CD4-positive, alpha-beta memory T cell (primary cell): ENCODE measurements at regions of chr18 and their contacts with region 1.

Region 1: DNA sequence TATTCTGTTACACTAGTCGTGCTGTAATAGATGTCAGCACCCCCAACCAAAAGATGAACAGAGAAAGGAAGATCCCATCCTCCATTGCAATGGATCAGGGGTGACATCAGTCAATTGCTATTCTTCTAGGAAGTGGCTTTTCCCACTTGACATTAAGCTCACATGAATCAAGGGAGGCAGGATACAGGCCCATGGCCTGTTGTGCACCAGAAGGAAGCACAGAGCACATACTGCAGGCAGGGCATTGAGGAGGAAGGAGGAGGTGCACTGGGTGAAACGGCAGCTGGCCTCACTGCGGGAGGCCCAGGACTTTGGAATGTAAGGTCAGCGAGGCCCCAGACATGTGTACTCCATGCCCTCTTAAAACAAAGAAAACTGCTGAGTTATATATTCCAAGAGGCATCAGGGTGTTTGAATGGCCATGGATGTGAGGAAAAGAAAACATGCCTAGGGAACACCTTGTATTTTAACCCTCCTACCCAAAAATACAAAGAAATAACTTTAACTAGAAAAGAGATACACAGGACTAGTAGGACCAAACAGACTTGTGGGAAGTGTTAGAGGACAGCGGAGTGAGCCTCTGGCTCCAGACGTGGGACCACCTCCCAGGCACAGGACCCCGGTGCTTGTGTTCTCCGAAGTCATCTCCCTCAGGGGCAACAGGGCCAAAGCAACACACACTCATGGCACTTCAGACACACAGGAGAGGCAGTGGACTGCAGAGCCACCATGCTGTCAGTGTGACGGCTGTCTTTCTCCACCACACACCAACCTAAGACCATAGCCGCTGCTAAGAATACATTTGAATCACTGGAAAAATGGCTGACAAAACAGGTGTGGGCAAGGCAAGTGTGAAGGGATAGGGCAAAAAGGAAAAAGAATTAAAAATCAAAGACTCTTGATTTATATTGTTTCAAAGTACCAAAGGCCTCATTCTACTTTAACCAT is 51.4 kb upstream of the RIOK3 start:
- DNase-seq: no peak
- H3K4me3 ChIP-seq: no peak overlapping the region
- H3K4me3 Mint-ChIP-seq: no peak overlapping the region
- H3K27ac ChIP-seq: no peak overlapping the region
- H3K27ac Mint-ChIP-seq: no peak overlapping the region
- H3K4me1 ChIP-seq: no peaks in the 10 kb centered on the region
- H3K4me1 Mint-ChIP-seq: peaks cover 0 to 6% (median 1%) of the 10 kb centered on the region in 4 donors
- H3K27me3 ChIP-seq: no peaks in the 10 kb centered on the region
- H3K27me3 Mint-ChIP-seq: no peaks in the 10 kb centered on the region

Region 2: DNA sequence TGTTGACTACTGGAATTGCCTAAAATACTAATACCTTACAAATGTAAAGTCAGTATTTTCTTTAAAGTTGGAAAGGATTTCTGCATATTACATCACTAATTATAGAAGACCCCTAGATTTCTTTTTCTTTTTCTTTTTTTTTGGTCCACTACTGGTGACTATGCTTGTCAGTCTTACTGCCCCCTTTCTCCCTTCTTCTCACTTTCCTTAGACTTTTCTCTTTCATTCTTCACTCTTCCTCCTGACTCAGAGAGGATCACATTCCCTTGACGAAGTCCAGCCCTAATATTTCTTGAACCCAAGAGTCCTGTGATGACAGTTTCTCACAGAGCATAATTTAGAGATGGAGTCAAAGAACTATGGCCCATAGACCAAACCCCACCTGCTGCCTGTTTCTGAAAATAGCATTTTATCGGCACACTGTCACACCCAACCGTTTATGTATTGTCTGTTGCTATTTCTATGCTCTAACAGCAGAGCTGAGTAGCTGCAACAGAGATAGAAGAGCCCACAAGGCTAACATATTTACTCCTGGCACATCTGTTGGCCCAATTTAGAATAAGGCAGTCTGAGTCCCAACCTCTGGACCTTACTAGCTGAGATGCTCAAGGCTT is 10.8 kb after region 1 on chr18:
- CTCF ChIA-PET with region 1: interaction called, 10 read pairs
- POLR2A ChIA-PET with region 1: no interaction called
- intact Hi-C with region 1: no loop called
- DNase-seq: no peak
- H3K4me3 ChIP-seq: no peak overlapping the region
- H3K4me3 Mint-ChIP-seq: no peak overlapping the region
- H3K27ac ChIP-seq: no peak overlapping the region
- H3K27ac Mint-ChIP-seq: no peak overlapping the region
- H3K4me1 ChIP-seq: no peaks in the 10 kb centered on the region
- H3K4me1 Mint-ChIP-seq: peaks cover 0 to 1% (median 0%) of the 10 kb centered on the region in 4 donors
- H3K27me3 ChIP-seq: no peaks in the 10 kb centered on the region
- H3K27me3 Mint-ChIP-seq: no peaks in the 10 kb centered on the region

Region 3: DNA sequence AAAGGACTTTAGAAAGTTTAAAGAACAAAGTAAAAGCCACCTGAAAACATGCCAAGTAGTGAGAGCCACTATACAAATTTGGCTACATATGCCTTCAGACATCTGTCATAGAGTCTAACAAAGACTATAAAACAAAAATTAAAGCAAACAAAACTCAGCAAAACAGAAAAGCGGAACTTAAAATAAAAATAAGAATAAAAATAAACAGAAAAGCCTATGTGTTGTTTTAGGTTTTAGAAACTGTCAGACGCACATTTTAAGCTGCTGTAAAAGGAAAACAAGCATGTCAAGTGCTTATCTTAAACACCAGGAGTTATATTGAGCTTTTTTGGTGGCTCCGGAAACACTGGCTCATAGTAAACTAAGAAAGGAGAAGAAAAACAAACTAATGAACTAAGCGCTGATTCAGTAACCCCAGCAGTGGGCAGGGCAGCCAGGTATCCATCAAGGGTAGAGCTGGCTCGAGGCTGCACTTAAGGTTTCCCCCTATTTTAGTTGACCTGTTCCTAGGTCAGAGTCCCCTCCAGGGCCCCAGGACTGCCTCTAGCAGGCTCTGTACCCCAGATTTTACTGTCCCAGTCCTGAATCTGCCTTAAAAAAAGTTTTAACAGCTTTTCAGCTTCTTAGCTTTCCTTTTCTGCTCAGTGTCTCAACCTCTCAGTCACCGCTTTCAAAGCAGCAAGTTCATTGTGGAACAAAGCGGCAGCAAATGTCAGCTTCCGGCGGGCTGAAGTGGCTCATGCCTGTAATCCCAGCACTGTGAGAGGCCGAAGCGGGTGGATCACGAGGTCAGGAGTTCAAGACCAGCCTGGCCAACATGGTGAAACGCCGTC is 86.3 kb after region 1 on chr18:
- CTCF ChIA-PET with region 1: no interaction called
- POLR2A ChIA-PET with region 1: no interaction called
- intact Hi-C with region 1: no loop called
- DNase-seq: peak in 3 of 5 donors; percentile 24 to 32 (median 30)
- H3K4me3 ChIP-seq: peak overlapping the region in 1 of 2 donors; percentile 11
- H3K4me3 Mint-ChIP-seq: peak overlapping the region; percentile 61 to 77 (median 72)
- H3K27ac ChIP-seq: peak overlapping the region; percentile 41
- H3K27ac Mint-ChIP-seq: peak overlapping the region; percentile 73 to 95 (median 85)
- H3K4me1 ChIP-seq: peaks cover 8% of the 10 kb centered on the region
- H3K4me1 Mint-ChIP-seq: peaks cover 7 to 20% (median 9%) of the 10 kb centered on the region in 4 donors
- H3K27me3 ChIP-seq: no peaks in the 10 kb centered on the region
- H3K27me3 Mint-ChIP-seq: no peaks in the 10 kb centered on the region

Region 4: DNA sequence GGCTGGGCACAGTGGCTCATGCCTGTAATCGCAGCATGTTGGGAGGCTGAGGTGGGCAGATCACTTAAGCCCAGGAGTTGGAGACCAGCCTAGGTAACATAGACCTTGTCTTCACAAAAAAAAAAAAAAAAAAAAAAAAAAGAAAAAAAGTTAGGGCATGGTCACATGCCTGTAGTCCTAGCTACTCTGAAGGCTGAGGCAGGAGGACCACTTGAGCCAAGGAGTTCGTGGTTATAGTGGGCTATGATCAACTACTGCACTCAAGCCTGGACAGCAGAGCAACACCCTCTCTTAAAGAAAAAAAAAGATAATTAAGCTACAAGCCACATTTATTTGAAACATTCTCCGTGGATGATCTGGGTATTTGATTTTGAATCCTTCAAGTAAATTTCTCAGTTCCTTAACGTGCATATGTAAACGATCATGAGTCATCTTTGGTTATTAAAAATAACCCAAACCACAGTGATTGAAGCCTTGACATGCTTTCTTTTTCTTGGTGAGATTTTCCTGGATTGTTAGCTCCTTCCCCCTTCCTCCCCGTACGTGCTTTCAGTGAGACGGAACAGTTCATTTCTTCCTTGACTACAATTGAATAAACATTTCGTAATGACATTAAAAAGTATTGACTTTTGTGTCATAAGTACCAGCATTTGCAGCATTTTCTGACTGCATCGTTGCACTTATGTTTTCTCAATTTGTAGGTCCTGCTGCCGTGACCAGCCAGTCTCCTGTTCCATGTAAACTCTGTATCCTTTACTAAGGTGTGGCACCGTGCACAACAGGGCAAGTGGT is 122.0 kb after region 1 on chr18:
- CTCF ChIA-PET with region 1: no interaction called
- POLR2A ChIA-PET with region 1: no interaction called
- intact Hi-C with region 1: no loop called
- DNase-seq: no peak
- H3K4me3 ChIP-seq: no peak overlapping the region
- H3K4me3 Mint-ChIP-seq: no peak overlapping the region
- H3K27ac ChIP-seq: no peak overlapping the region
- H3K27ac Mint-ChIP-seq: peak overlapping the region in 3 of 7 donors; percentile 8 to 81 (median 24)
- H3K4me1 ChIP-seq: no peaks in the 10 kb centered on the region
- H3K4me1 Mint-ChIP-seq: peaks cover 0 to 5% (median 3%) of the 10 kb centered on the region in 4 donors
- H3K27me3 ChIP-seq: no peaks in the 10 kb centered on the region
- H3K27me3 Mint-ChIP-seq: no peaks in the 10 kb centered on the region